PC-3 (cell line): ENCODE measurements at regions of chr3 and their contacts with region 1.

Region 1: GRCh38 chr3:150319904-150320303 is 88.2 kb upstream of the TSC22D2 start:
- DNase-seq: peak; percentile 98
- ATAC-seq: peak; percentile 81
- H3K4me3 ChIP-seq: peak overlapping the region; percentile 45
- H3K27ac ChIP-seq: peak overlapping the region; percentile 29
- H3K4me1 ChIP-seq: peaks cover 55% of the 10 kb centered on the region
- H3K27me3 ChIP-seq: no peaks in the 10 kb centered on the region
- CTCF ChIP-seq: no peak

Region 2: GRCh38 chr3:150114873-150115540 is 204.9 kb before region 1 on chr3:
- CTCF ChIA-PET with region 1: no interaction called
- POLR2A ChIA-PET with region 1: no interaction called
- intact Hi-C with region 1: no loop called
- DNase-seq: peak; percentile 30
- ATAC-seq: peak; percentile 60
- H3K4me3 ChIP-seq: no peak overlapping the region
- H3K27ac ChIP-seq: no peak overlapping the region
- H3K4me1 ChIP-seq: peaks cover 7% of the 10 kb centered on the region; the same call in 1 of the 2 replicates
- H3K27me3 ChIP-seq: no peaks in the 10 kb centered on the region
- CTCF ChIP-seq: no peak

Region 3: DNA sequence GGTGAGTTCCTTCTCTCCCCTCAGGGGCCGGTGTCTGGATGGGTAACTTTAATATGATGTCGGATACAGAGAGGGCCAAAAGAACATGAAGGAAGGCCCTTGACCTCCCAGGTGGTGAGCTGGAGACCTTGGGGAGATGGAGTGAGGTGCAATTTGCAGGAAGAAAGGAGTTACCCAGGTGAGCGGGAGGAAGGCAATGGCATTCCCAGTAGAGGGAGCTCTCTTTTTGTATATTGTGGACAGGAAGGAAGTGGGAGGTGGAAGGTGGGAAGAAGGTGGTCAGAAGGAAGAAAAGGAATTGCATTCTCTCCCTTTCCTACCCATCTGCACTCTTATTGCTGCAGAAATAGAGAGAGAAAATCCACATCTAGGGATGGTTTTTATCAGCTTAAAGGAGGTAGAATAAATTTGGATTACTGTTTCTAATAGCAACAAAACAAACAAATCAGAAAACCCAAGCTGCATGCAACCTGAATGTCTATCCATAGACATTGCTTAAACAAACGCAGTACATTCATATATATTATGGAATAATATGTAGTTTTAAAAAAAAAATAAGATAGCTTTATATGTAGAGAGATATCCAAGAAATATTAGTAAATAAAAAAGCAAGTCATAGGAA is 80.8 kb before region 1 on chr3:
- CTCF ChIA-PET with region 1: no interaction called
- POLR2A ChIA-PET with region 1: no interaction called
- intact Hi-C with region 1: loop called (anchors 2 kb)
- DNase-seq: peak; percentile 77
- ATAC-seq: peak; percentile 40
- H3K4me3 ChIP-seq: peak overlapping the region; percentile 61
- H3K27ac ChIP-seq: peak overlapping the region; percentile 95
- H3K4me1 ChIP-seq: peaks cover 46% of the 10 kb centered on the region
- H3K27me3 ChIP-seq: no peaks in the 10 kb centered on the region
- CTCF ChIP-seq: peak; percentile 96

Region 4: DNA sequence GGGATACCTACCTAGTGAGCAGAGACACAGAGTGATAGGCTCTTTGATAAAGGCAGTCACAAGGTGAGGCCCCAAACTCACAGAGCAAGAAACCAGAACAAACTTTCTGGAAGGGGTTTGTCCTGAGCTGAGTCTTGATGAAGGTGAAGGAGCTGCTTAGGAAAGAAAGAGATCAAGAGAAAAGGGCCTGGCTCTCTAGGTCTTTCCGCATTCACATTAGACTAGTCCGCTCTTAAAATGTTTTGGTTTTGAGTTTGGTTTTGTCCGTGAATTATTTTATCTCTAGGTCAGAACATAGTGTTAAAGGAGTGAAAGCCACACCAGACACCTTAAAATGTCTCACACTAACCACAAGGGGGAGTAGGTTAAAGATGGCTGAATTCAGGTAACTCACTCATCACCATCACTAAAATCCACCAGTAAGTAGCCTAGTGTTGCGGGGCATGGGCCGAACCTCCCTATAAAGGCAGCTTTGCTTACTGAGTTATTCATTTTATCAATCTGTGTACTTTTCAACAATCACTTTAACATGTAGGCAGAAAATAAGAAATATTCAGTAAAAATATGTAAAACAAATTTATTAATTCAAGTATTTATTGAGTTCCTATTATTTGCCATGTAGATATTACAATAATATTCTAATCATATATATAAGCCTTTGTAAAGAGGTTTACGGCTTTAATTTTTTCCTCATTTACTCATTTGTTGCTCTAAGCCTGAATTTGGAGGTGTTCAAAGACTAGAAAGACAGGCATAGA is 33.3 kb before region 1 on chr3:
- CTCF ChIA-PET with region 1: no interaction called
- POLR2A ChIA-PET with region 1: no interaction called
- intact Hi-C with region 1: loop called (anchors 2 kb)
- DNase-seq: peak; percentile 80
- ATAC-seq: peak; percentile 98
- H3K4me3 ChIP-seq: peak overlapping the region; percentile 29
- H3K27ac ChIP-seq: no peak overlapping the region
- H3K4me1 ChIP-seq: peaks cover 7% of the 10 kb centered on the region
- H3K27me3 ChIP-seq: no peaks in the 10 kb centered on the region
- CTCF ChIP-seq: peak; percentile 87

Region 5: DNA sequence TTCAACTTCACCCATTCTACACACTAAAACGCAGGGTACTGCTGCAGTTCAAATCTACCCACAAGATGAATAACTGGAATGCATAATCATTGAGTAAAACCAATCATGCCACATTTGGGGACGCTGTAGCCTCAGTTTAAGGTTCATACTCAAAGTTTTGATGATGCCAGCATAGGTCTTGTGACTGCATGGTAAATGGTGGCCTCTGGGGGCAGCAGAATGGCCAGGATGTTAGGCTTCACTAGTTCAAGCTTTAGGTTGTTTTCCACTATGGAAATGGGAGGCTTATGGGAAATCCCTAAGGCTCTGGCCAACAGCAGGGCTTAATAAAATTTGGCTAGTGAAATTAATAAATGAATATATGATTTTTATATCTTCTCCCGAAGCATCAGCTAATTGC is 16.1 kb before region 1 on chr3:
- CTCF ChIA-PET with region 1: no interaction called
- POLR2A ChIA-PET with region 1: no interaction called
- intact Hi-C with region 1: loop called (anchors 2 kb)
- DNase-seq: peak; percentile 44
- ATAC-seq: no peak
- H3K4me3 ChIP-seq: no peak overlapping the region
- H3K27ac ChIP-seq: no peak overlapping the region
- H3K4me1 ChIP-seq: peaks cover 41% of the 10 kb centered on the region
- H3K27me3 ChIP-seq: no peaks in the 10 kb centered on the region
- CTCF ChIP-seq: peak; percentile 70

Region 6: GRCh38 chr3:150348500-150348899 is 28.6 kb after region 1 on chr3:
- CTCF ChIA-PET with region 1: interaction called, 6 read pairs
- POLR2A ChIA-PET with region 1: no interaction called
- intact Hi-C with region 1: loop called (anchors 1 kb)
- DNase-seq: peak; percentile 96
- ATAC-seq: peak; percentile 78
- H3K4me3 ChIP-seq: peak overlapping the region; percentile 53
- H3K27ac ChIP-seq: peak overlapping the region; percentile 83
- H3K4me1 ChIP-seq: peaks cover 72% of the 10 kb centered on the region
- H3K27me3 ChIP-seq: no peaks in the 10 kb centered on the region
- CTCF ChIP-seq: no peak

Region 7: GRCh38 chr3:150371741-150372254 is 51.9 kb after region 1 on chr3:
- CTCF ChIA-PET with region 1: no interaction called
- POLR2A ChIA-PET with region 1: no interaction called
- intact Hi-C with region 1: loop called (anchors 1 kb)
- DNase-seq: peak; percentile 100
- ATAC-seq: peak; percentile 69
- H3K4me3 ChIP-seq: peak overlapping the region; percentile 63
- H3K27ac ChIP-seq: peak overlapping the region; percentile 84
- H3K4me1 ChIP-seq: peaks cover 49% of the 10 kb centered on the region
- H3K27me3 ChIP-seq: no peaks in the 10 kb centered on the region
- CTCF ChIP-seq: no peak